ENCODE measurements at regions of chr1 and their contacts with region 1.

Region 1: GRCh38 chr1:170657275-170657853 is 6.6 kb upstream of the PRRX1 start:
- DNase-seq: no peak
- ATAC-seq: no peak
- H3K4me3 ChIP-seq: no peak overlapping the region
- H3K27ac ChIP-seq: no peak overlapping the region
- H3K4me1 ChIP-seq: peaks cover 0 to 15% (median 0%) of the 10 kb centered on the region in 12 donors
- H3K27me3 ChIP-seq: peaks cover 0 to 47% (median 2%) of the 10 kb centered on the region in 9 donors
- CTCF ChIP-seq: no peak
- POLR2A ChIP-seq: no peak

Region 2: DNA sequence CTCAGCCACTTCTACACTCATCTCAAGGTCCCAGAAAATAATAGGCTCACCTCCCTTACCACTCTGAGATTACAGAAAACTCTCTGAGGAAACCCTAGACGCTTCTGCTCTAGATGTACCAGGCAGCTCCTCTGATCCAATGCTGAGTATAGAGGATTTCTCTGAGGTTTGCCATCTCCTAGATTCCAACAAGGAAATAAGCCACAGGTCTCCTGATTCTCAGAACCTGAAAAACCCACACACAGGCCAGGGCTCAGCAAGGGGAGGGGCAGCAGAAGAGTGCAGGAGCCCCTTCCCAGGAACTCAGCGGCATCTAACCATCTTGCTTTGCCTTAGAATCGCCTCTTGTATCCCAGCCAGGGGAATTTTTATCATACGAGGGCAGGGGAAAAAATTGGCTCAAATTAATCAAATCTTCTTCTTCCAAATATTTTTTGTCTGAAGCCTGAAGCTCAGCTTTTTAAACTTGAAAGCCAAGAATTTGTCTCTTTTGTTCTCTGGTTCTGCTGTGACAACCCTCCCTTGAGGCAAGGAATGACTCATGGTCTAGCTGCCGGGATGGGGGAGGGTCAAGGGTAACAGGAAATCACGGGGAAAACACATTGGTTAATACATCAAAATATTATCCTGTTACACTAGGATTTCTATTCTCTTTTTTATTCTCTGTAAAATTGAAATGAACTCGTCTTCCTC is 94.6 kb before region 1 on chr1:
- intact Hi-C with region 1: loop called in 2 of 10 experiments (anchors 10 kb)
- DNase-seq: peak; percentile 66 to 82 (median 71)
- ATAC-seq: peak; percentile 79 to 95 (median 88)
- H3K4me3 ChIP-seq: peak overlapping the region in 6 of 12 donors; percentile 3 to 34 (median 18)
- H3K27ac ChIP-seq: peak overlapping the region; percentile 3 to 88 (median 71)
- H3K4me1 ChIP-seq: peaks cover 0 to 29% (median 12%) of the 10 kb centered on the region in 12 donors
- H3K27me3 ChIP-seq: no peaks in the 10 kb centered on the region
- CTCF ChIP-seq: no peak
- POLR2A ChIP-seq: no peak

Measured in heart left ventricle (tissue), 16 donors.